Left ventricle myocardium inferior (tissue), 1 donor: ENCODE measurements at regions of chr13 and their contacts with region 1.

Region 1: GRCh38 chr13:49300739-49301589 is 53.2 kb downstream of the CDADC1 start:
- DNase-seq: no peak
- H3K4me3 ChIP-seq: peak overlapping the region; percentile 55
- H3K27ac ChIP-seq: peak overlapping the region; percentile 52
- H3K4me1 ChIP-seq: peaks cover 21% of the 10 kb centered on the region
- H3K27me3 ChIP-seq: no peaks in the 10 kb centered on the region
- CTCF ChIP-seq: peak; percentile 89

Region 2: GRCh38 chr13:49436890-49437289 is 135.9 kb after region 1 on chr13:
- intact Hi-C with region 1: loop called (anchors 10 kb)
- DNase-seq: peak; percentile 25
- H3K4me3 ChIP-seq: no peak overlapping the region
- H3K27ac ChIP-seq: peak overlapping the region; percentile 29
- H3K4me1 ChIP-seq: no peaks in the 10 kb centered on the region
- H3K27me3 ChIP-seq: no peaks in the 10 kb centered on the region
- CTCF ChIP-seq: peak; percentile 31